Activated B cell treated with CpG ODN at 0.5 μM for 24 hours (primary cell): ENCODE measurements at regions of chr11 and their contacts with region 1.

Region 1: GRCh38 chr11:72609045-72609444 is 65.2 kb downstream of the PDE2A start:
- DNase-seq: no peak
- ATAC-seq: no peak
- H3K4me3 Mint-ChIP-seq: no peak overlapping the region
- H3K27ac Mint-ChIP-seq: no peak overlapping the region
- H3K4me1 Mint-ChIP-seq: peaks cover 11% of the 10 kb centered on the region
- H3K27me3 Mint-ChIP-seq: peaks cover 15% of the 10 kb centered on the region
- CTCF ChIP-seq: peak; percentile 28

Region 2: DNA sequence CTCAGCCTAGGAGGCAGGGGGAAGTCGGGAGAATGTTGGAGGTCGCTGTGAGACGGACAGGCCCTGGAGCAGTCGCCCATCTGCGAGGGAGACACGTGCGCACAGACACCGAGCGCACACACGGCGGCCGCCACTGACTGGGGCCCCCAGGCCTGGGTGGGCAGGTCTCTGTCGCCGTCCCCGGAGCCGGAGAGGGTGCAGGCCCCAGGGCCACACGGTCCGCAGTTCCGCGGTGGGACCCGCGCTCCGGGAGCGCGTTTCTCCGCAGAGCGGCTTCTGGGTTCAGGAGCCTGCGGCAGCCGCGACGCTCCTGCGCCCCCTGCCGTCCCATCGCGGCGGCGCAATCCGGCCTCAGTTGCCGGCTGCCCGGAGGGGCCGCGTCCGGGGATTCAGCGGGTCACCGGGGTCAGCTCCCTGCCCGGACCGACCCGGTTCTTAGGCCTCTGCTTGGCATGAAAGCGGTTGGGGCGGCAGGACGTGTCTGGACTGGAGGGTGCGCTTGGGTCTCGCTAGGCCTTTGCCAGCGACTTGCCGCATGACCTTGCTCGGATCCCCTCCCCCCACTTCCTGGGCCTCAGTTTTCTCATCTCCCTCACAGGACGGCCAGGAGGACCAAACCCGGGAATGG is 34.0 kb after region 1 on chr11:
- CTCF ChIA-PET with region 1: no interaction called
- POLR2A ChIA-PET with region 1: no interaction called
- intact Hi-C with region 1: loop called (anchors 1 kb)
- DNase-seq: peak; percentile 78
- ATAC-seq: peak; percentile 85
- H3K4me3 Mint-ChIP-seq: peak overlapping the region; percentile 67
- H3K27ac Mint-ChIP-seq: no peak overlapping the region
- H3K4me1 Mint-ChIP-seq: no peaks in the 10 kb centered on the region
- H3K27me3 Mint-ChIP-seq: peaks cover 7% of the 10 kb centered on the region
- CTCF ChIP-seq: peak; percentile 72

Region 3: GRCh38 chr11:72721689-72722049 is 112.6 kb after region 1 on chr11:
- CTCF ChIA-PET with region 1: no interaction called
- POLR2A ChIA-PET with region 1: no interaction called
- intact Hi-C with region 1: no loop called
- DNase-seq: peak; percentile 28
- ATAC-seq: no peak
- H3K4me3 Mint-ChIP-seq: peak overlapping the region; percentile 97
- H3K27ac Mint-ChIP-seq: peak overlapping the region; percentile 94
- H3K4me1 Mint-ChIP-seq: peaks cover 85% of the 10 kb centered on the region
- H3K27me3 Mint-ChIP-seq: no peaks in the 10 kb centered on the region
- CTCF ChIP-seq: no peak